ENCODE measurements at regions of chr6 and their contacts with region 1.

Region 1: DNA sequence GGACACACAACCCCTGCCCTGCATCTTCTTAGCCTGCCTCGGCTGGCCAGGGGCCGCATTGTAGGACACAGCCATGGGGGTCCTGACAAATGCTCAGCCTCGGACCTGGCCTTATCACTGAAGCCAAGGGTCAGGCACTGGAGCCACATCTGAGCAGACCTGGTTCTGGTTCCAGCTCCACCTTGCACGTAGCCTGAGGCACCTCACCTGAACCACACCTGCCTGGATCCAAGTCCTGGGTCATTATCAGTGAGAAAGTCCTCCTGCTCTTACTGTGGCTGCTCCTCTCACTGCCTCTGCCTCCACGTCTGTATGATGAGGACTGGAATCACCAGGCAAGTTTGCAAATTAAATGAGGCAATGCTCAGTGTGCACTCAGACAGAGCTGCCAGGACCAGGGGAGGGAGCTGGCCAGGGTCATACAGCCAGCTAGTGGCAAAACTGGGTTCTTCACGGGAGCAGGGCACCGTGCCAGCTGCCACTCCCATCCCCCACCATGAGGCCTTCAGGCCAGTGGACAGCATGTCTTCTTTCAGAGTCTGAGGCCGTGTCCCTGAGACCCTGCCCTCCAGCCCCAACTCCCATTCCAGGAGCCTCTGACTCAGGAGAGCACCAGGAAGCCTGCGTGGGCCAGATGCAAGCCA is 40.2 kb downstream of the MRPL14 start:
- DNase-seq: peak; percentile 70 to 85 (median 80)
- ATAC-seq: peak; percentile 79
- H3K4me3 ChIP-seq: no peak overlapping the region
- H3K27ac ChIP-seq: peak overlapping the region in 3 of 4 donors; percentile 29 to 39 (median 29)
- H3K4me1 ChIP-seq: peaks cover 9% of the 10 kb centered on the region
- H3K27me3 ChIP-seq: no peaks in the 10 kb centered on the region
- CTCF ChIP-seq: peak in 3 of 7 experiments; percentile 13 to 25 (median 21)
- POLR2A ChIP-seq: no peak

Region 2: GRCh38 chr6:43667245-43668150 is 419.6 kb before region 1 on chr6:
- intact Hi-C with region 1: loop called (anchors 5 kb)
- DNase-seq: peak; percentile 83 to 92 (median 90)
- ATAC-seq: peak; percentile 87
- H3K4me3 ChIP-seq: no peak overlapping the region
- H3K27ac ChIP-seq: peak overlapping the region in 1 of 4 donors; percentile 22
- H3K4me1 ChIP-seq: peaks cover 33% of the 10 kb centered on the region
- H3K27me3 ChIP-seq: no peaks in the 10 kb centered on the region
- CTCF ChIP-seq: peak; percentile 94 to 97 (median 96)
- POLR2A ChIP-seq: no peak

Region 3: DNA sequence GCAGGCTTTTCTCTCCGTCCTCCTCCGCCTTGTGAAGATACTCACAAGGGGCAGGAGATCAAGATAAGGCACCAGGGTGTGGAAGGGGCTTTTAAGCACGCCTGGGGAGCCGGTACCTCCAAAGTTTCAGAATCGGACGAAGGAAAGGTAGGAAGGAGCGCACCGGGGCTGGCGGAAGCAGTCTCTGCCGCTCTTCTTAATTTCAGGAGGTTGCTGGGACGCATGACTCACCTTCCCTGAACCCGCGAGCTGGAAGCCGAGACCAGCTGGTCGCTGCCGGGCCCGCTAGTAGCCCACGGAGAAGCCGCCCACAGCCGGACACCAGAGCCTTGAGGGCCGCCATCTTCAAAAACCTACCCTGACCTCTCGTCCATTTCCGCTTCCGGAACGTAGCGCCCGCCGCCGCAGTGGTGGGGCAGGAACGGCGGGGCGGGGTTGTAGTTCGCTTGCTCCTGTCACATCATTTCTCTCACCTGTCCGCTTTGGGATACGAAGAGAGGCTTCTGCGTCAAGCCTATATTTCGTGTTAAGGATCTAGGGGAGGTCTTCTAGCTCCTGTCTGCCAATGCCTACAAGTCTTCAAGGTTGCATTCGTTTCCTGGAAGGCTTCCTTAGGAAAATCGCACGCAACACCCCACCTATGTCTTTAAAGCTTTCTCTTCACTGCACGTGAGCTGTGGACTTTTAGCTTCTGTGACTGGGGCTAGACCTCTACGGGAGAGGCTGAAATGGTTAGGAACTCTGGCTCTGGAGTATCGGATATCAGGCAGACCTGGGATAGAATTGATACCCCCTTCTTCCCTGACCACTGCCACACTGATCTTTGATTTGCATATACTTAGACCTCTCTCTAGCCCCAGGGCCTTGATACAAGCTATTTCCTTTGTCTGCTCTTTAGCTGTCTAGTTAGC is 399.4 kb before region 1 on chr6 and contains the start of gene MRPS18A:
- intact Hi-C with region 1: no loop called
- DNase-seq: peak; percentile 75 to 85 (median 79)
- ATAC-seq: peak; percentile 96
- H3K4me3 ChIP-seq: peak within 1 kb of the TSS; percentile 49 to 59
- H3K27ac ChIP-seq: peak within 1 kb of the TSS; percentile 20 to 69 (median 48)
- H3K4me1 ChIP-seq: peaks cover 21% of the 10 kb centered on the region
- H3K27me3 ChIP-seq: no peaks in the 10 kb centered on the region
- CTCF ChIP-seq: no peak
- POLR2A ChIP-seq: peak in 2 of 3 donors; percentile 58 to 70
- total RNA-seq, gene MRPS18A: 16.9 to 36.3 TPM

Region 4: DNA sequence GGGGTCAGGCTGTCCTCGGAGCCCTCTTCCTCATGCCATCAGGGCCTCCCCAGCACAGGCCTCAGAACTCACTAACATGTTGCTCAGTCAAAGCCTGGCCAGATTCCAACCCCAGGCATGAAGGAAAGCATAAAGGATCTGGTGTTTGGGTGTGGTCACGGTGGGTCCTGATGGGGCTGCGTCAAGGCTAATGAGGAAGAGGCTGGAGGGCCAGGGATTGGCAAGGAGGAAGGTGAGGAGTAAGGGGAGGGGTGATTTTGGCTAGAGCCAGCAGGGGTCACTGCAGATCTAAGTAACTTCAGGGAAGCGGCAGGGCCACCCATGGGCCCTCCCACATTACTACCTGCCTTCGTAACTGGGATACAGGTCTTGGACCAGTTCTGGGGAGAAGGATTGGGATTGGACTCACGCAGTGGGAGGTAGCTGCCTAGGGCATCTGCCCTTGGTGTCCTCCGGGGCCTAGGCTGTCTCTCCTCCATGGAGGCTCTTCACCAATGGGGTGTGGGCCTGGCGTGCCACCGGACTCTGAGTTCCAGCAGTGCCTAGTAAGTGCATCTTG is 363.2 kb before region 1 on chr6:
- intact Hi-C with region 1: loop called (anchors 5 kb)
- DNase-seq: peak; percentile 81 to 89 (median 84)
- ATAC-seq: peak; percentile 94
- H3K4me3 ChIP-seq: no peak overlapping the region
- H3K27ac ChIP-seq: no peak overlapping the region
- H3K4me1 ChIP-seq: no peaks in the 10 kb centered on the region
- H3K27me3 ChIP-seq: no peaks in the 10 kb centered on the region
- CTCF ChIP-seq: peak; percentile 41 to 89 (median 77)
- POLR2A ChIP-seq: no peak

Region 5: DNA sequence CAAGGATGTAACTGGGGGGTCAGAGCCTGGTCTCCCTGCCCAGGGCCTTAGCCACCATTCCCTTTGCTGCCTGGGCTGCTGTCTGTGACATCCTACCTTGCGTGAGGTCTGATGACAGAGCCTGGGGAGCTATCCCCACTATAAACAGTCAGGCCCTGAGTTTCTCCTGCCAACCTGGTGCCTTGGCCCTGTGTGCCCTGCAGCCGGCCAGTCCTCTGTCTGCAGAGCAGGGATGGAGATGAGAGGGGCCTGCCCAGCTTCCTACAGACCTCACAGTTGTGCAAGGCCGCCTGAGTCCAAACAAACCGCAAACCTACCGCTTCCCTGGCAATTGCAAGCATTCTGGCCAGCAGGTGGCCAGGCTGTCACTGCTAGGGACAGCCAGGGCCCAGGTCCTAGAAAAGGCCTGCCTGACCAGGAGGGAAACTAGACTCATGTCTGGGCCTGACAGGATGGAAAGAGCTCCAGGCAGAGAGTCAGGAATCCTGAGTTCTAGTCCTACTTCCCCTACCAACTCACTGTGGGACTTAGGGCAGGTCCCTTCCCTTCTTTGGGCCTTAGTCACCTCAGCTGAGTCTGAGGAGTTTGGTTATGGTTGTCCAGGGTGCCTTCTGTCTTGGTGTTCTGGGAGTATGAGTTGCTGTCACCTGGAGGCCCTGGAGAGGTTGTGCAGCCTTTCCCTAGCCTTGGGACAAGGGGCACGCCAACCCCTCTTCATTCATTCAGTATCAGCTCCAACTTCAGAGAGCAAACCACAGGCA is 230.9 kb before region 1 on chr6:
- intact Hi-C with region 1: loop called (anchors 10 kb)
- DNase-seq: peak; percentile 67 to 82 (median 78)
- ATAC-seq: peak; percentile 80
- H3K4me3 ChIP-seq: no peak overlapping the region
- H3K27ac ChIP-seq: peak overlapping the region in 2 of 4 donors; percentile 8 to 43
- H3K4me1 ChIP-seq: peaks cover 18% of the 10 kb centered on the region
- H3K27me3 ChIP-seq: no peaks in the 10 kb centered on the region
- CTCF ChIP-seq: peak; percentile 42 to 86 (median 77)
- POLR2A ChIP-seq: no peak

Region 6: GRCh38 chr6:44028789-44029310 is 58.2 kb before region 1 on chr6:
- intact Hi-C with region 1: no loop called
- DNase-seq: no peak
- ATAC-seq: no peak
- H3K4me3 ChIP-seq: no peak overlapping the region
- H3K27ac ChIP-seq: no peak overlapping the region
- H3K4me1 ChIP-seq: no peaks in the 10 kb centered on the region
- H3K27me3 ChIP-seq: no peaks in the 10 kb centered on the region
- CTCF ChIP-seq: no peak
- POLR2A ChIP-seq: no peak

Region 7: GRCh38 chr6:44201638-44202303 is 114.7 kb after region 1 on chr6:
- intact Hi-C with region 1: no loop called
- DNase-seq: no peak
- ATAC-seq: no peak
- H3K4me3 ChIP-seq: no peak overlapping the region
- H3K27ac ChIP-seq: peak overlapping the region in 1 of 4 donors; percentile 29
- H3K4me1 ChIP-seq: peaks cover 36% of the 10 kb centered on the region
- H3K27me3 ChIP-seq: no peaks in the 10 kb centered on the region
- CTCF ChIP-seq: no peak
- POLR2A ChIP-seq: no peak

Region 8: DNA sequence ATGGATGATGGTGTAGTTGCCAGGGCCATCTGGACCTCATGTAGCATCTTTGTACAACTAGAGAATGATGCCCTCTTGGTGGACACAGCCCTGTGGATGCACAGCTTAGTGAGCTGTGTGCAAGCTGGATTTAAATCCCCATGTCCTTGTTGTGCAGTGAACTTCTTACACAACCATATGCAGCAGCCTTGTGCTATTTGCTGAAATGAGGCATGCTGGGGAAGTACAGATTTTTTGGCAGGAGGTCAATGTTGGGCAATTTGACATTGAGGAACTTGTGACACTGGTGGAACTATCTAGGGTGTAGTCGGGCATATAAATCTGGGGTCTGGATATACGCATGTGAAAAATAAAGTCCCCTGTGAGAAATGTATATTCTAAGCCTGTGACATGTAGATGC is 294.7 kb after region 1 on chr6:
- intact Hi-C with region 1: no loop called
- DNase-seq: peak in 3 of 4 donors; percentile 12 to 72 (median 22)
- ATAC-seq: no peak
- H3K4me3 ChIP-seq: no peak overlapping the region
- H3K27ac ChIP-seq: no peak overlapping the region
- H3K4me1 ChIP-seq: peaks cover 6% of the 10 kb centered on the region
- H3K27me3 ChIP-seq: no peaks in the 10 kb centered on the region
- CTCF ChIP-seq: no peak
- POLR2A ChIP-seq: no peak

Measured in body of pancreas (tissue), 4 donors.